ENCODE measurements at regions of chr6 and their contacts with region 1.

Region 1: GRCh38 chr6:31079656-31080261 is 32.6 kb downstream of the C6orf15 start:
- DNase-seq: peak; percentile 34 to 77 (median 72)
- ATAC-seq: peak; percentile 93
- H3K4me3 ChIP-seq: peak overlapping the region; percentile 21
- H3K4me3 Mint-ChIP-seq: peak overlapping the region; percentile 37 to 81 (median 66)
- H3K27ac ChIP-seq: no peak overlapping the region
- H3K27ac Mint-ChIP-seq: peak overlapping the region in 4 of 9 donors; percentile 19 to 42 (median 28)
- H3K4me1 ChIP-seq: peaks cover 5 to 6% of the 10 kb centered on the region in 2 donors
- H3K4me1 Mint-ChIP-seq: peaks cover 6 to 9% (median 8%) of the 10 kb centered on the region in 7 donors
- H3K27me3 ChIP-seq: no peaks in the 10 kb centered on the region
- H3K27me3 Mint-ChIP-seq: peaks cover 0 to 26% (median 0%) of the 10 kb centered on the region in 5 donors

Region 2: GRCh38 chr6:30990422-30991086 is 89.2 kb before region 1 on chr6:
- CTCF ChIA-PET with region 1: no interaction called
- POLR2A ChIA-PET with region 1: no interaction called
- intact Hi-C with region 1: no loop called
- DNase-seq: peak in 8 of 9 donors; percentile 4 to 51 (median 25)
- ATAC-seq: peak; percentile 67
- H3K4me3 ChIP-seq: peak overlapping the region; percentile 26
- H3K4me3 Mint-ChIP-seq: peak overlapping the region; percentile 62 to 90 (median 80)
- H3K27ac ChIP-seq: no peak overlapping the region
- H3K27ac Mint-ChIP-seq: peak overlapping the region; percentile 33 to 90 (median 75)
- H3K4me1 ChIP-seq: peaks cover 0 to 12% of the 10 kb centered on the region in 2 donors
- H3K4me1 Mint-ChIP-seq: peaks cover 10 to 15% (median 14%) of the 10 kb centered on the region in 7 donors
- H3K27me3 ChIP-seq: no peaks in the 10 kb centered on the region
- H3K27me3 Mint-ChIP-seq: peaks cover 0 to 3% (median 0%) of the 10 kb centered on the region in 5 donors

Region 3: DNA sequence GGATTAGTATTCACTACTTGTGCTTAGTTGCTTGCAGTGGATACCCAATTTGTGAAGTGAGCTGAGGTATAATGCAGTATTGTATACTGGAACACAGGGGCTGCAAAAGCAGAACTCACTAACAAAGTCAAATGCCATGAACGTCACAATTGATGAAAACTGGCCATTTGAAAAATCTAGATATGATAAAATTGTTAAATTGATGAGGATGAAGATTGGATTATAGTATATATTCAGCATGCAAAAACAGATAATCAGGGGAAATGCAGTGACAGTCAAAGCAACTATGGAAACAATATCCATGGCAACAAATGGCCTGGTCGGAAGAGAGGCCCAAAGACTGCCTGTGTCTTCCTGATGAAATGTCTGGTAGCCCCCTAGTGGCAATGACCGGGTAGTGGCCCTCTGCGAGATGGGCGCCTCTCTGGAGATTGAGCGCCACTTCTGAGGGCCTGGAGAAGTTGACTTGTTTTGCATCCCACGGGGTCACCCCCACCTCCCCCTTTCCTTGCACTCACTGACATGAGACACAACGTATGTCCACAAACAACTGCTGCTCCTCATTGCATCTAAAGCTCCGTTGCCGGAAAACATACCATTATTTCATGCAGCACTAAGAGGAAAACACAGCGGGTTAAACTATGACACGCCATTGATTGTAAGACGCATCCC is 11.0 kb before region 1 on chr6:
- CTCF ChIA-PET with region 1: interaction called, 12 read pairs
- POLR2A ChIA-PET with region 1: no interaction called
- intact Hi-C with region 1: no loop called
- DNase-seq: peak; percentile 45 to 73 (median 61)
- ATAC-seq: peak; percentile 96
- H3K4me3 ChIP-seq: no peak overlapping the region
- H3K4me3 Mint-ChIP-seq: no peak overlapping the region
- H3K27ac ChIP-seq: no peak overlapping the region
- H3K27ac Mint-ChIP-seq: peak overlapping the region in 1 of 9 donors; percentile 20
- H3K4me1 ChIP-seq: no peaks in the 10 kb centered on the region
- H3K4me1 Mint-ChIP-seq: peaks cover 0 to 7% (median 0%) of the 10 kb centered on the region in 7 donors
- H3K27me3 ChIP-seq: no peaks in the 10 kb centered on the region
- H3K27me3 Mint-ChIP-seq: peaks cover 0 to 2% (median 0%) of the 10 kb centered on the region in 5 donors

Region 4: GRCh38 chr6:31094389-31094881 is 14.7 kb after region 1 on chr6:
- CTCF ChIA-PET with region 1: interaction called, 21 read pairs
- POLR2A ChIA-PET with region 1: interaction called, 7 read pairs
- intact Hi-C with region 1: no loop called
- DNase-seq: peak in 7 of 9 donors; percentile 13 to 75 (median 65)
- ATAC-seq: peak; percentile 78
- H3K4me3 ChIP-seq: peak overlapping the region; percentile 20
- H3K4me3 Mint-ChIP-seq: peak overlapping the region; percentile 58 to 91 (median 76)
- H3K27ac ChIP-seq: peak overlapping the region; percentile 39
- H3K27ac Mint-ChIP-seq: peak overlapping the region; percentile 75 to 99 (median 96)
- H3K4me1 ChIP-seq: peaks cover 28 to 39% of the 10 kb centered on the region in 2 donors
- H3K4me1 Mint-ChIP-seq: peaks cover 16 to 54% (median 42%) of the 10 kb centered on the region in 7 donors
- H3K27me3 ChIP-seq: no peaks in the 10 kb centered on the region
- H3K27me3 Mint-ChIP-seq: peaks cover 0 to 12% (median 0%) of the 10 kb centered on the region in 5 donors

Region 5: GRCh38 chr6:31114970-31115849 is 35.5 kb after region 1 on chr6:
- CTCF ChIA-PET with region 1: interaction called, 15 read pairs
- POLR2A ChIA-PET with region 1: no interaction called
- intact Hi-C with region 1: loop called in 1 of 2 experiments (anchors 1 kb)
- DNase-seq: peak in 3 of 9 donors; percentile 23 to 45 (median 23)
- ATAC-seq: no peak
- H3K4me3 ChIP-seq: no peak overlapping the region
- H3K4me3 Mint-ChIP-seq: peak overlapping the region in 2 of 10 donors; percentile 28 to 46
- H3K27ac ChIP-seq: no peak overlapping the region
- H3K27ac Mint-ChIP-seq: peak overlapping the region in 2 of 9 donors; percentile 32 to 76
- H3K4me1 ChIP-seq: no peaks in the 10 kb centered on the region
- H3K4me1 Mint-ChIP-seq: peaks cover 0 to 12% (median 5%) of the 10 kb centered on the region in 7 donors
- H3K27me3 ChIP-seq: no peaks in the 10 kb centered on the region
- H3K27me3 Mint-ChIP-seq: peaks cover 0 to 24% (median 9%) of the 10 kb centered on the region in 5 donors

Region 6: GRCh38 chr6:31128093-31128676 is 48.4 kb after region 1 on chr6:
- CTCF ChIA-PET with region 1: interaction called, 11 read pairs
- POLR2A ChIA-PET with region 1: interaction called, 3 read pairs
- intact Hi-C with region 1: no loop called
- DNase-seq: peak; percentile 29 to 79 (median 55)
- ATAC-seq: peak; percentile 87
- H3K4me3 ChIP-seq: no peak overlapping the region
- H3K4me3 Mint-ChIP-seq: no peak overlapping the region
- H3K27ac ChIP-seq: no peak overlapping the region
- H3K27ac Mint-ChIP-seq: peak overlapping the region in 2 of 9 donors; percentile 0 to 1
- H3K4me1 ChIP-seq: no peaks in the 10 kb centered on the region
- H3K4me1 Mint-ChIP-seq: peaks cover 5 to 8% (median 6%) of the 10 kb centered on the region in 7 donors
- H3K27me3 ChIP-seq: no peaks in the 10 kb centered on the region
- H3K27me3 Mint-ChIP-seq: peaks cover 0 to 17% (median 5%) of the 10 kb centered on the region in 5 donors

Measured in naive thymus-derived CD4-positive, alpha-beta T cell (primary cell).